CD14-positive monocyte (primary cell): ENCODE measurements at regions of chr4 and their contacts with region 1.

Region 1: GRCh38 chr4:105291925-105292324 is 145.2 kb downstream of the TET2 start:
- DNase-seq: no peak
- H3K4me3 ChIP-seq: no peak overlapping the region
- H3K4me3 Mint-ChIP-seq: no peak overlapping the region
- H3K27ac ChIP-seq: no peak overlapping the region
- H3K27ac Mint-ChIP-seq: no peak overlapping the region
- H3K4me1 ChIP-seq: peaks cover 18% of the 10 kb centered on the region in 2 donors
- H3K4me1 Mint-ChIP-seq: peaks cover 23% of the 10 kb centered on the region
- H3K27me3 ChIP-seq: no peaks in the 10 kb centered on the region
- H3K27me3 Mint-ChIP-seq: peaks cover 0 to 1% (median 0%) of the 10 kb centered on the region in 3 donors
- CTCF ChIP-seq: no peak

Region 2: GRCh38 chr4:105461221-105461620 is 169.3 kb after region 1 on chr4:
- intact Hi-C with region 1: loop called in 1 of 2 experiments (anchors 10 kb)
- DNase-seq: peak; percentile 9 to 30 (median 22)
- H3K4me3 ChIP-seq: peak overlapping the region; percentile 7 to 48 (median 41)
- H3K4me3 Mint-ChIP-seq: peak overlapping the region; percentile 58 to 74
- H3K27ac ChIP-seq: peak overlapping the region; percentile 53 to 77
- H3K27ac Mint-ChIP-seq: peak overlapping the region; percentile 81 to 91 (median 86)
- H3K4me1 ChIP-seq: peaks cover 21 to 26% of the 10 kb centered on the region in 2 donors
- H3K4me1 Mint-ChIP-seq: peaks cover 33% of the 10 kb centered on the region
- H3K27me3 ChIP-seq: no peaks in the 10 kb centered on the region
- H3K27me3 Mint-ChIP-seq: peaks cover 0 to 2% (median 0%) of the 10 kb centered on the region in 3 donors
- CTCF ChIP-seq: no peak